ENCODE measurements at regions of chr1 and their contacts with region 1.

Region 1: DNA sequence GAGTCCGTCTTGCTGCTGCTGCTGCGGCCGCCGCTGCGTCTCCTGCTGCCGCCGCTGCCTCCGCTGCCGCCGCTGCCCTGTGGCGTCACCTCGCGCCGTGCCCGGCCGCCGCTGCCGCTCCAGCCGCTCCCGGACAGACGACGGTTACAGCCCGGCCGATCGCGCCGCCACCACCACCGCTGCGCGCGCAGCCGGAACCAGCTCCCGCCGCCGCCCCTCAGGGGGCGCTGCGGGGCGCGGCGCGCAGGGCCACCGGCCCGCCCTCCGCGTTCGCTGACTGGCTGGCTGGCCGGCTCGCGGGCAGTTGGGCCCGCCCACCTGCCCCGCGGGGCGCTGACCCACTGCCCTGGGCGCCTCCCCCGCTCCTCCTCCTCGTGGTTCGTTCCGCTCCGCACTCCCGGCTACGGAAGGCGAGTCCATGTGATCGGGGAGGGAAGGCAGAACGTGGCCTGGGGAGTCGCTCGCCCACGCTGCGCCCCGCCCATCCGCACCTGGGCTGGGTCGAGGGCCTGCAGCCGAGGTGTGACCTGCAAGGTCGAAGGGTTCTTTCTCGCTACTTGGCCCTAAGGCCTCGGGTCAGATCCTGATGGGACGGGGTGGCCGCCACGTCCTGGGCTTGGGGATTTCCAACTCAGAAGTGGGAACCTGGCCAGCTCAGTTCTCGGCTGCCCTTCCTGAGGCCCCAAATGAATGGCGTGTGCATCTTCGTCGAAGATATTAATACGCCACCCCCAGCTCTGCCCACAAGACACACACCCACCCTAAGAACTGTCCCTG is at the start of gene PTP4A2:
- DNase-seq: peak; percentile 97
- H3K4me3 Mint-ChIP-seq: peak within 1 kb of the TSS; percentile 96
- H3K27ac Mint-ChIP-seq: peak within 1 kb of the TSS; percentile 99
- H3K4me1 Mint-ChIP-seq: peaks cover 33% of the 10 kb centered on the region
- H3K27me3 Mint-ChIP-seq: no peaks in the 10 kb centered on the region
- CTCF ChIP-seq: peak; percentile 56
- total RNA-seq, gene PTP4A2: 337 and 366 TPM in 2 replicates

Region 2: GRCh38 chr1:31576201-31576669 is 362.1 kb before region 1 on chr1 and contains the start of gene TINAGL1:
- CTCF ChIA-PET with region 1: no interaction called
- intact Hi-C with region 1: loop called (anchors 10 kb)
- DNase-seq: peak; percentile 95
- H3K4me3 Mint-ChIP-seq: no peak within 1 kb of the TSS
- H3K27ac Mint-ChIP-seq: no peak within 1 kb of the TSS
- H3K4me1 Mint-ChIP-seq: peaks cover 51% of the 10 kb centered on the region
- H3K27me3 Mint-ChIP-seq: no peaks in the 10 kb centered on the region
- CTCF ChIP-seq: no peak
- total RNA-seq, gene TINAGL1: 388 and 430 TPM in 2 replicates

Region 3: GRCh38 chr1:31955917-31956736 is 17.8 kb after region 1 on chr1:
- CTCF ChIA-PET with region 1: interaction called, 50 read pairs
- intact Hi-C with region 1: loop called (anchors 1 kb)
- DNase-seq: peak; percentile 92
- H3K4me3 Mint-ChIP-seq: peak overlapping the region; percentile 20
- H3K27ac Mint-ChIP-seq: peak overlapping the region; percentile 100
- H3K4me1 Mint-ChIP-seq: peaks cover 54% of the 10 kb centered on the region
- H3K27me3 Mint-ChIP-seq: no peaks in the 10 kb centered on the region
- CTCF ChIP-seq: no peak

Region 4: GRCh38 chr1:31977385-31978131 is 39.2 kb after region 1 on chr1:
- CTCF ChIA-PET with region 1: no interaction called
- intact Hi-C with region 1: no loop called
- DNase-seq: peak; percentile 16
- H3K4me3 Mint-ChIP-seq: no peak overlapping the region
- H3K27ac Mint-ChIP-seq: no peak overlapping the region
- H3K4me1 Mint-ChIP-seq: no peaks in the 10 kb centered on the region
- H3K27me3 Mint-ChIP-seq: no peaks in the 10 kb centered on the region
- CTCF ChIP-seq: peak; percentile 28

Region 5: DNA sequence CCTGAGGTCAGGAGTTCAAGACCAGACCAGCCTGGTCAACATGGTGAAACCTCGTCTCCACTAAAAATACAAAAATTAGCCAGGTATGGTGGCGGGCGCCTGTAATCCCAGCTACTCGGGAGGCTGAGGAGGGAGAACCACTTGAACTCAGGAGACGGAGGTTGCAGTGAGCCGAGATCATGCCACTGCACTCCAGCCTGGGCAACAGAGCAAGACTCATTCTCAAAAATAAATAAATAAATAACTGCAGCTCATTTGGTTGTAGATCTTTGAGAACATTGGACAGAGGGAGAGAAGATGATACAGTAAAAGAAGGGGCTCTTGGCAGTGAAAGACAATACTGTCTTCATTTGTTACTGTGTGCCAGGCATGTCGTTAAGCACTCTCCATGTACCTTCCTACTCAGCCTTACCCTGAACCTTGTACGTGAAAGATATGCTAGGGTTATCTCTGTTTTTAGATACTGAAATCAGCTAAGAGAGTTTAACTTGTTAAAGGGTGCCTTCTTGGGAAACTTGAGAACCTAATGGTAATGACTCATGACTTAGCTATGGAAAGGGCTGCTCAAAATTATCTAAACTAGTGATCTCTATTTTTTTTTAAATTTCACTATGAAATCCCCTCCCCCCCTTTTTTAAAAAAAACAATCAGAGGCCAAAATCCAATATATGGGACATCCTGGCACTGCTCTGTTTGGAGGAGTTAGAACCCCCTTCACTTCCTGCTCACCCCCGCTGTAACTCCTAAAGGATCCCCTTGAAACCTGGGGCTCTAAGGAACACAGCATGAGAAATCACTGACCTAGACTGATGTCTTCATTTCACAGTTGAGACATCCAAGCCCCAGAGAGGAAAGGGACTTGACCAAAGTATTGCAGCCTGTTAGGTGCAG is 162.7 kb after region 1 on chr1:
- CTCF ChIA-PET with region 1: no interaction called
- intact Hi-C with region 1: no loop called
- DNase-seq: no peak
- H3K4me3 Mint-ChIP-seq: no peak overlapping the region
- H3K27ac Mint-ChIP-seq: no peak overlapping the region
- H3K4me1 Mint-ChIP-seq: peaks cover 13% of the 10 kb centered on the region
- H3K27me3 Mint-ChIP-seq: no peaks in the 10 kb centered on the region
- CTCF ChIP-seq: no peak